Aorta (tissue), 5 donors: ENCODE measurements at regions of chr1 and their contacts with region 1.

Region 1: DNA sequence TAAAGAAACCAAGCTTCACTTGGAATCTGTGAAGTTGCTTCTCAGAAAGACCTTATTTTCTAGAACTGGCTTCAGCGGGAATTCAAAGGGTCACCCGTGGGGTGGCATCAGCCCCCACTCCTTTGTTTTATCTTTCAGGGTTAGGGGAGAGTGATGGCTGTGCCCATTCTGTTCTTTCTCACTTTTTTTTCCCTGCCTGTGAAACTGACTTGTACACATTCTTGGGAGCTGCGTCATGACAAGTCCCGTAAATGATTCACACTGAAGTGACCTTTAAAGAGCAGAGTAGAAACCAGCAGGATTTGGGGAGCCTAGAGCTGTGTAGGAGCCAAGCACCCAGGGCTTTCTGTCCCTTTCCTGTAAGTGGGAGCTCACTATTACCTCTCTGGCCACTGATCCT is 43.8 kb downstream of the SLC44A3 start:
- DNase-seq: peak in 1 of 2 donors; percentile 59
- ATAC-seq: peak; percentile 87
- H3K4me3 ChIP-seq: no peak overlapping the region
- H3K27ac ChIP-seq: peak overlapping the region; percentile 75 to 97
- H3K4me1 ChIP-seq: peaks cover 7 to 8% of the 10 kb centered on the region in 2 donors
- H3K27me3 ChIP-seq: no peaks in the 10 kb centered on the region

Region 2: DNA sequence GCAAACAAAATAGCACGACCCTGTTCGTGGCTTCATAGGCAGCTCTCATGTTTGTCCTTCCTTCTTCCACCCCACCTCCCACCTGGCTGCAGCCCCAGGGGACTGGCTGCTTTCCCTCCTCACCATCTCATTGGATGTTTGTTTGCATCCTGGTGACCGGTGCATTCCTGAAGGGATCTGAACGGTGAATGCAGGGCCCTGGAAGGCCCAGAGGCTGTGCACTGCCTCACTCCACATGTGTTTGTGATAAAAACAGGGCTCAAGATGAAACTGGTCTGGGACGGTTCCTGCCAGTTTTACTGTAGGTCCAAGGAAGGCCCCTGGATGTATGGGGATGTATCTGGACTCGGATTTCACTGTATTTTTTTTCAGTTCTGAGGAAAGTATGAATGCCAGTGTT is 20.2 kb after region 1 on chr1:
- intact Hi-C with region 1: loop called in 1 of 2 experiments (anchors 1 kb)
- DNase-seq: no peak
- ATAC-seq: peak; percentile 45
- H3K4me3 ChIP-seq: no peak overlapping the region
- H3K27ac ChIP-seq: peak overlapping the region; percentile 58 to 69
- H3K4me1 ChIP-seq: peaks cover 0 to 3% of the 10 kb centered on the region in 2 donors
- H3K27me3 ChIP-seq: no peaks in the 10 kb centered on the region

Region 3: DNA sequence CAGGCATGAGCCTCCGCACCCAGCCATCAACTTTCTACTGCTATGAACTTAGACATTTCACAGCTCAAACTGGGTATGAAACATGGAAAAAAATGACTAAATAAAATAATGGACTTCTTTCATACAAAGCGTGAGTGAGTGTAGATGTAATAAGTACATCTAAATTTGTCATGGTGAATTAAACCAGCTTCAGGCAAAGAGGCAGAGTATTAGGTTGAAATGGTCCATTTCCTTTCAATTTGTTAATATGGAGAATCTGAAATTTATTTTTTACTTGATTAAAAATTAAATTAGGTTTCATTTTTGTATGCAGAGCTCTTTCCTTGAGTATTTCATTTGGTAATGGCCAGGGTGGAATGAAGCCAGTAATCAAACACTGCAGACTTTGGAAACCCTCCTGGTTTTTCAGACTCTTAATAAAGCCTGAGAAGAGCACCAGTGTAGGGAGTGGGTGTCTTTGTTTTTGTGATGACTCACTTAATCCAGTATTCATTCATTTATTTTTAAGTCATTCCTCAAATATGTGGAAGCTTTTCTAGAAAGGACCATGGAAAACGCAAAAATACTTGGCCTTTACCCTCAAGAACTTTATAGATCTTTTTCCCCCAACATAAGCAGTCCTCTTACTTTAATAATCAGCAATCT is 159.6 kb after region 1 on chr1:
- intact Hi-C with region 1: loop called in 1 of 2 experiments (anchors 5 kb)
- DNase-seq: no peak
- ATAC-seq: peak; percentile 68
- H3K4me3 ChIP-seq: no peak overlapping the region
- H3K27ac ChIP-seq: peak overlapping the region in 1 of 2 donors; percentile 76
- H3K4me1 ChIP-seq: peaks cover 5 to 9% of the 10 kb centered on the region in 2 donors
- H3K27me3 ChIP-seq: no peaks in the 10 kb centered on the region